Mucosa of descending colon (tissue), 3 donors: ENCODE measurements at regions of chr6 and their contacts with region 1.

Region 1: GRCh38 chr6:151323791-151324487 is 67.4 kb downstream of the ZBTB2 start:
- DNase-seq: peak; percentile 76 to 87 (median 83)
- ATAC-seq: peak; percentile 92
- H3K4me3 ChIP-seq: no peak overlapping the region
- H3K4me1 ChIP-seq: peaks cover 9% of the 10 kb centered on the region
- CTCF ChIP-seq: peak; percentile 95

Region 2: DNA sequence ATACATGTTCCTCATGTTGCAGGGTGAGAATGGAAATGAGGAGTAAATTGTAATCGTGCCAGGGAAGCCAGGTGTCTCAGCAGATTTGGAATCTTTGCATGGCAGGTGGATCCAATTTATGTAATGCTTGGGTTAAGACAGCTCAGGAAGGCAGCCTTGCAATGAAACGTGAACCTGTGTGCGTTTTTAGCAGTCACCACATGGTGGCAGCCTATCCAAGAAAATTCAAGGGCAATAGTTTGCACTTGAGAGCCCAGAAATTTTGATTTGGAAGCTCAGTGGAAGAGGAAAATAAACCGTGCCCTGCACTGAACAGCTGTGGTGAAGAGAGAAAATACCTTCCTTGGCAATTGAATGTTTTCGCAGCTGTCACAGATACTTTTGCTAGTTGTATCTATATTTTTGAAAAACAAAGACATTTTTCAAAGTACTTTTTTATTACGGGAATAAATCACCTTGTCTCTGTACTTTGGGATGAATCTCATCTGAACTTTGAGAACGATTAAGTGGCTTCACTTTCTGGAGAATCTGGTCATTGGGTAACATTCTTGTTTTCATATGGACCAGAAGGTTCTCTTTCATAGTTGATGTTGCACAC is 432.0 kb before region 1 on chr6:
- intact Hi-C with region 1: loop called in 1 of 2 experiments (anchors 5 kb)
- DNase-seq: peak in 2 of 3 donors; percentile 72 to 82
- ATAC-seq: peak; percentile 82
- H3K4me3 ChIP-seq: no peak overlapping the region
- H3K4me1 ChIP-seq: no peaks in the 10 kb centered on the region
- CTCF ChIP-seq: peak; percentile 75

Region 3: DNA sequence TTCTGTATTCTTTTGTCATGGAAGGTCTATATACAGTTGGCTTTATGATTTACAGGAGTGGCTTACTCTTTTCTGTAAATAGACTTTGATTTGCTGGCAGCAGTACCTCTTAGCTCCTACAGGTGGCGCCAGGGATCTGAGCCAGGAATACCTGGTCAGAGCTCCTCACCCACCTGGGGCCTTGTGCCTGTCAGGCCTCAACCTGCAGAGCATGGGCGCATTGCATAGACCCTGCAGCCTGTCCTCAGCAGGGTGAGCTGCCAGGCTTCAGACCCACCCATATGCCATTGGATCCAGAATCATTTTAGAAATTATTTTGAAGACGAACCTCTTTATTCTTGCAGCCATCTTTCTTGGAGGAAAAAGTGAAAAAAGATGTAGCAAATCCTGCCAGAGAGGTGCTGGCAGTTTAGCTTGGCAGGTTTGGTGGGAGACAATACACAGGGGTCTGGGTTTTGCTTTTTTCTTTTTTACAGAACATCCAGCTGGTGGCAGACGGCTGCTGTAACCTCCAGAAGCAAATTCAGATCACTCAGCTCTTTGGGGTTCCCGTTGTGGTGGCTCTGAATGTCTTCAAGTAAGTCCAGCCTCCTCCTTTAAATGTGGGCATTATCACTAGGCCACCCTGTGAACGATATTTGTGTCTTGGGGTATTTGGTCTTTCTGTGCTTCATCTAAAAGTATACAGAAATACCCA is 309.4 kb before region 1 on chr6:
- intact Hi-C with region 1: loop called (anchors 5 kb)
- DNase-seq: peak; percentile 66 to 77 (median 75)
- ATAC-seq: peak; percentile 97
- H3K4me3 ChIP-seq: no peak overlapping the region
- H3K4me1 ChIP-seq: no peaks in the 10 kb centered on the region
- CTCF ChIP-seq: peak; percentile 97

Region 4: DNA sequence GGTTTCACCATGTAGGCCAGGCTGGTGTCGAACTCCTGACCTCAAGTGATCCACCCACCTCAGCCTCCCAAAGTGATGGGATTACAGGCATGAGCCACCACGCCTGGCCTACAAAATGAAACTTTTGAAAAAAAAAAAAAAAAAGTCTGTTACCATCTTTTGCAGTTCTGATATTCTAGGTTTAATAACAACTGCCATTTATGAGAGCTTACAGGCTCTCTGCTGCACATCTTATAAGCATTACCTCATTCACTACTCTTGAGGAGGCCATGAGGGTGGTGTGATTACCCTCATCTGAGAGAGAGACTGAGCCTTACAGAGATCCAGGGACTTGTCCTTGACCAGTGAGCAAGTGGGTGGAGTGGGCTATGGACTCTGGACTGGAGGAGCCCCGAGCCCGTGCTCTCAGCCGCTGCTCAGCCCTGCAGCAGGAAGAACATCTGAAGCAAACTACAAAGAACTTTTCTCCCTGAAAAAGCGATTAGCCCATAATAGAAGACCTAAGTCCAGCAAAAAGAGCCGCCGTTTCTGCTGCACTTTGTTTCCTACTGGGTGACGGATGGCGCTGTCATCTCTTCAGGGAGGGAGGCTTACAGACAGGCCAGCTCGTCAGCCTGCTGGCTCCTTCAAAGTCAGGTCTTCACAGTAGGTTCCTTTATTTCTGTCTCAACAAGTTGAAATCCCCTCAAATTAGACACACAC is 204.0 kb before region 1 on chr6:
- intact Hi-C with region 1: no loop called
- DNase-seq: no peak
- ATAC-seq: peak; percentile 82
- H3K4me3 ChIP-seq: no peak overlapping the region
- H3K4me1 ChIP-seq: no peaks in the 10 kb centered on the region
- CTCF ChIP-seq: no peak